Posterior cingulate gyrus (tissue), 11 donors: ENCODE measurements at regions of chr5 and their contacts with region 1.

Region 1: GRCh38 chr5:82225525-82226172 is 52.5 kb downstream of the RPS23 start:
- DNase-seq: peak; percentile 18 to 90 (median 60)

Region 2: DNA sequence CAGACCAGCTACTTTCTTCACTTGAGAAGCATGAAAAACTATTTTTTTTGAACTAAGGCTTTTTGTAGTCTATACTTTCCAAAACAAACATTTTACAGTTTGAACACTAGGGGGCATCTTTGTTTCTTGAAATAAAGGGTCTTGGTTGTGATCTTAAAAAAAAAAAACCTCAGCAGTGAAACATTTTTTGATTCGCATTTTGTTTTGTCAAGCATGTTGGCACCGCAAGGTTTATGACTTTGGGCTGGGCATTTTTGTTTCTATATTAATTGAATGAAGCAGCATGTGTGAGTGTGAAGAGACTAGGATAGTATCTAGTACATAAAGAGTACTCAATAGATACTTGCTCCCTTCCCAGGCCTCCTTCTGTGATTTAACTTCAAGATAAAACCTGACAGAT is 800.1 kb before region 1 on chr5:
- intact Hi-C with region 1: loop called (anchors 10 kb)
- DNase-seq: no peak

Region 3: GRCh38 chr5:81506900-81507588 is 718.6 kb before region 1 on chr5:
- intact Hi-C with region 1: loop called (anchors 10 kb)
- DNase-seq: peak in 4 of 10 donors; percentile 34 to 50 (median 42)

Region 4: DNA sequence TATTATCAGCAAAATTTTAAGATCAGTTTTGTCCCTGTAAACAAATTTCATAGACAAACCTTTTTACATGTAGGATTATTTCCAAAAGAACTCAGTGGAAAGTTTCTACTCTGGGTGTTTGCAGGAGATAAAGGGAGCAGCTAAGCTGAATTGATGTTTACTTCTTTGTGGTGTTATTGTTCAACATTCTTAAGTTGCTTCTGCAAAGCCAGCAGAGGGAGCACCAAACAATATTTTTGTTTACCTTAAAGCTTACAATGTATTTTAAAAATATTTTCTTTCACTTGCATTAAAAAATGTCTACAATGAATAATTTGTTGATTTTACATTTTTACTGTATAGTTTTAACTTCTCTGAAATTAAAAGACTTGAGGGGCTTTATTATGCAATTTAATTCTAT is 118.4 kb before region 1 on chr5:
- intact Hi-C with region 1: loop called (anchors 5 kb)
- DNase-seq: no peak

Region 5: GRCh38 chr5:82130602-82131001 is 95.0 kb before region 1 on chr5:
- intact Hi-C with region 1: no loop called
- DNase-seq: peak in 1 of 10 donors; percentile 54

Region 6: DNA sequence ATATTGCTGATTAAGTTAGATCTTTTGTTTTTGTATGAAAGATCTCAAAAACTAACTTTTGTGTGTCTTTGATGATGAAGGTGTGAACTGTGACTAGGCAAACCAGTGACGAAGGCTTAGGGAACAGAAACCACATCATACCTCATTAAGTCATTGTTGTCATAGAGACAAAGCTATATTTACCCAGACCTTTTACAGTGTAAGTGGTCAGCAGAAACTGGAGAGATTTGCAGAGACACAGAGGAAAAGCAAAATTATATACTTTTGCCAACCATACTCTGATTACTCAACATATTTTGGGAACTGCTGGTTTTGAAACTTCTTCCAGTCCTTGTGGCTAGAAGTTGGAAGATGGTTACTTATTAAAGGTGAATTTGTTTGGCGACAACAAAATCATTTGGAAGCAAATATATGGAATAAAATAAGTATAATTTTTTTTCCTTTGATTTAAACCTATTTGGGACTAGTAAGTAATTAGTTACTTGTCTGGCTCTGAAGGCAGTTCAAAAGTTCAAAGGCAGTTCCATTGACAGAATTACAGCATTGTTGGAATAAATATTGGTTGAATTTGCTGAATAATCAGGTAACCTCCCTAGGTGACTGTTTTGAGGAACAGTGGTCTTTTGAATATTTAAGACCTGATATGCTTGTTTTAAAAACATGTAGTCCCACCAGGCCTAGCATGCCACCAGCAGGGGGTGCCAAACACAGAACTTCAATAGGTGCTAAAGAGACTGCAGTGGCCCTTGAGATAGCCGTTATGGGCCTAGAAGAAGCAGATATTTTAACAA is 51.3 kb before region 1 on chr5:
- intact Hi-C with region 1: loop called (anchors 2 kb)
- DNase-seq: peak in 9 of 10 donors; percentile 23 to 89 (median 59)

Region 7: DNA sequence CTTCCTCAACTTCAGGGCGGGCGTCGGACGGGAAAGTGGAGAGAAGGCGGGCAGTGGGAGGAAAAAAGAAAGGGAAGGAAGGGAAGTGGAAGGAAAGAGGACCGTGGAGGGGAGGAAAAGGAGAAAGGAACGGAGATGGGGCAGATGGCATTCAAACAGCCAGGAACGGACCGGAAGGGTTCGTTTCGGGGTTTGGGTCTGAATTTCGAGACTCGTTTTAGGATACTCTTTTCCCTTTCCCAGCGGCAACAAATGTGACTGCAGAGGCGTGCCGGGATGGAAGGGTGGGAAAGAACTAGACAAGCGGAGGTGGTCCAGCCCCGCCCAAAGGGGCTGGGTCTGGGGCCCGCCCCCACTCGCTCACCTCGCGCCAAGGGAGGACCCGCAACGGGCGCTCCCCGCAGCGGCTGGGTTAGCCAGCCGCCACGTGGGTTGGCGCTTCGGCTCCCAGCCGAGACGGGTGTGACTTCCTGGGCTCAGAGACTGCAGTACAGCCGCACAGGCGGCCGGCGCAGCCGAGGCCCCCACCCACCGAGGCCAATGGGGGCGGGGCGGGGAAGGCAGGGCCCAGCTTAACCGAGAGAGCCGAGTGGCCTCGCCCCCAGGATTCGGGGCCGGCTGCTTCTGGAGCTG is 1248.6 kb after region 1 on chr5:
- intact Hi-C with region 1: no loop called
- DNase-seq: peak; percentile 13 to 94 (median 36)